Thyroid gland (tissue), 4 donors: ENCODE measurements at regions of chr17 and their contacts with region 1.

Region 1: DNA sequence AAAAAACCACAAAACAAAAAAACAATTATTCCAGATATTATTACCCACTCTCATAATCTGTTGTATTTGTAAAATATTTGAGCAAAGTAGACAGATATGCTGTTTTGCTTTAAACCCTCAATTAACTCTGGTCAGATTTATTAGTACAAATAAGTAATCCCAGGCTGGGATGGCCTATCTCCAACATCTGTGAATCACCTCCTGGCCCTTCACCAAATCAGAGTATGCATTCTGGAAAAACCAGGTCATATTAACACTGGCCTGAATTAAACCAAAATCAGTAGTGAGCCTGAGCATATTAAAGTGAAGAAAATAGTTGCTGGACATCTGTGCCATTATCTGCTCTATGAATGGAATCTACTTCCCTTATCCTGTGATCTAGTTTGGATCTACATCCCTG is 41.0 kb downstream of the STAT3 start:
- DNase-seq: peak; percentile 53 to 59
- H3K4me3 ChIP-seq: no peak overlapping the region
- H3K27ac ChIP-seq: peak overlapping the region in 2 of 3 donors; percentile 72 to 94
- H3K4me1 ChIP-seq: peaks cover 45 to 47% of the 10 kb centered on the region in 2 donors
- H3K27me3 ChIP-seq: no peaks in the 10 kb centered on the region
- CTCF ChIP-seq: no peak
- POLR2A ChIP-seq: no peak

Region 2: DNA sequence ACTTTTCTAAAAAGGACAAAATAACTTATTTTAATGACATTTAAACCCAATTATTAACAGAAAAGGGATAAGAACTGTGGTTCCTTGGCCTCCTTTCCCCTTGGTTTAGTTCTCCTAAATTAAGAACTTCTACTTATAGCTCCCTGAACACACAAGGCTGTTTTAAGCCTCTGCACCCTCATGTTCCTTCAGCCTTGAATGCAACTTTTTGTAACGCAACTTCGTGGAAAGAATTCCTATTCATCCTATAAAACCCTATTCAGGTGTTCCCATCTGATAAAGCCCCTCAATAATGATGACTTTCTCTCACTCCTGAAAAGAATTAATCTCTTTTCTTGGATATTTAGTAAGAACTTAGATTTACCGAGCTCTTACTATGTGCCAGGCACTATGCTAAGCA is 34.7 kb after region 1 on chr17:
- intact Hi-C with region 1: loop called (anchors 5 kb)
- DNase-seq: no peak
- H3K4me3 ChIP-seq: no peak overlapping the region
- H3K27ac ChIP-seq: peak overlapping the region in 2 of 3 donors; percentile 58 to 90
- H3K4me1 ChIP-seq: peaks cover 47 to 68% of the 10 kb centered on the region in 2 donors
- H3K27me3 ChIP-seq: no peaks in the 10 kb centered on the region
- CTCF ChIP-seq: no peak
- POLR2A ChIP-seq: no peak

Region 3: GRCh38 chr17:42744806-42745617 is 397.8 kb after region 1 on chr17 and contains the start of gene EZH1:
- intact Hi-C with region 1: no loop called
- DNase-seq: peak; percentile 86 to 89
- H3K4me3 ChIP-seq: peak within 1 kb of the TSS; percentile 33 to 69 (median 58)
- H3K27ac ChIP-seq: peak within 1 kb of the TSS; percentile 82 to 93 (median 92)
- H3K4me1 ChIP-seq: peaks cover 10 to 29% of the 10 kb centered on the region in 2 donors
- H3K27me3 ChIP-seq: no peaks in the 10 kb centered on the region
- CTCF ChIP-seq: peak in 1 of 6 experiments; percentile 32
- POLR2A ChIP-seq: peak; percentile 44 to 85
- total RNA-seq, gene EZH1: 39.3 to 69.2 (median 56.4) TPM